ENCODE measurements at regions of chr5 and their contacts with region 1.

Region 1: GRCh38 chr5:76175051-76175666 is 92.0 kb downstream of the SV2C start:
- DNase-seq: peak; percentile 74
- ATAC-seq: no peak
- H3K4me3 Mint-ChIP-seq: no peak overlapping the region
- H3K27ac Mint-ChIP-seq: no peak overlapping the region
- H3K4me1 Mint-ChIP-seq: peaks cover 32% of the 10 kb centered on the region
- H3K27me3 Mint-ChIP-seq: no peaks in the 10 kb centered on the region

Region 2: DNA sequence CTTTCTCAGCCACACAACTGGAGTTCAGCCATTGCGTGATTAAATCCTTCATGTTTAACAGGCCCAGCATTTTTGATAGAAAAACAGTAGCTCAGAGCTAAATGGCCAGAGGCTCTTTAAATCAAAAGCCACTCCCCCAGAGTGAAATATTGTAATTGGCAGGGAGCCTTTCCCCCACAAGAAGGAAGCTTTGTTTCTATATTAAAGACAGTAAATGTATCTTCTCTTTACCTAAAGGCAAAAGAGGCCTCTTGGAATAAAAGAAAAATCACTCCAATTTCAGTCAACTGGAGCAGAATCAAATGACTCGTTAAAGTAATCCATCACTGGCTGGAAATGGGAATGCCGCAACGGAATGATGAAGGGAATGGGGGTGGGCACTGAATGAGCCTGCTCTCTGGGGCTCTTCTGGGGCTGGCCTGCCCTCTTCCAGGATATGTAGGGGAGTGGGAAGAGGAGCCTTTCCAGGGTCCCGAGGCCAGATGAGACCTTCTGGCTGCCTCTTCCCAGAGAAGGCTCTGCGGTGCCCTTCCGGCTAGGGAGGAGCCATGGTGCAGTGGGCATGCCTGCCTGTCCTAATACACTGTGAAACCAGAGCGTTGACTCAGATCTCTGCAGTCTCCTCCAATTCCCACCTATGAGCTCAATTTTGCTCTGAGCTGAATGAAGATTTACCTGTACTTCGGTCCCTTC is 518.7 kb before region 1 on chr5:
- CTCF ChIA-PET with region 1: no interaction called
- POLR2A ChIA-PET with region 1: no interaction called
- intact Hi-C with region 1: no loop called
- DNase-seq: no peak
- ATAC-seq: no peak
- H3K4me3 Mint-ChIP-seq: no peak overlapping the region
- H3K27ac Mint-ChIP-seq: no peak overlapping the region
- H3K4me1 Mint-ChIP-seq: no peaks in the 10 kb centered on the region
- H3K27me3 Mint-ChIP-seq: no peaks in the 10 kb centered on the region

Region 3: GRCh38 chr5:76074487-76075065 is 100.6 kb before region 1 on chr5:
- CTCF ChIA-PET with region 1: interaction called, 13 read pairs
- POLR2A ChIA-PET with region 1: no interaction called
- intact Hi-C with region 1: loop called (anchors 1 to 2 kb)
- DNase-seq: peak; percentile 50
- ATAC-seq: peak; percentile 72
- H3K4me3 Mint-ChIP-seq: no peak overlapping the region
- H3K27ac Mint-ChIP-seq: no peak overlapping the region
- H3K4me1 Mint-ChIP-seq: no peaks in the 10 kb centered on the region
- H3K27me3 Mint-ChIP-seq: peaks cover 50% of the 10 kb centered on the region

Region 4: GRCh38 chr5:76145945-76146344 is 29.2 kb before region 1 on chr5:
- CTCF ChIA-PET with region 1: interaction called, 14 read pairs
- POLR2A ChIA-PET with region 1: no interaction called
- intact Hi-C with region 1: no loop called
- DNase-seq: peak; percentile 38
- ATAC-seq: no peak
- H3K4me3 Mint-ChIP-seq: no peak overlapping the region
- H3K27ac Mint-ChIP-seq: no peak overlapping the region
- H3K4me1 Mint-ChIP-seq: no peaks in the 10 kb centered on the region
- H3K27me3 Mint-ChIP-seq: peaks cover 3% of the 10 kb centered on the region

Region 5: DNA sequence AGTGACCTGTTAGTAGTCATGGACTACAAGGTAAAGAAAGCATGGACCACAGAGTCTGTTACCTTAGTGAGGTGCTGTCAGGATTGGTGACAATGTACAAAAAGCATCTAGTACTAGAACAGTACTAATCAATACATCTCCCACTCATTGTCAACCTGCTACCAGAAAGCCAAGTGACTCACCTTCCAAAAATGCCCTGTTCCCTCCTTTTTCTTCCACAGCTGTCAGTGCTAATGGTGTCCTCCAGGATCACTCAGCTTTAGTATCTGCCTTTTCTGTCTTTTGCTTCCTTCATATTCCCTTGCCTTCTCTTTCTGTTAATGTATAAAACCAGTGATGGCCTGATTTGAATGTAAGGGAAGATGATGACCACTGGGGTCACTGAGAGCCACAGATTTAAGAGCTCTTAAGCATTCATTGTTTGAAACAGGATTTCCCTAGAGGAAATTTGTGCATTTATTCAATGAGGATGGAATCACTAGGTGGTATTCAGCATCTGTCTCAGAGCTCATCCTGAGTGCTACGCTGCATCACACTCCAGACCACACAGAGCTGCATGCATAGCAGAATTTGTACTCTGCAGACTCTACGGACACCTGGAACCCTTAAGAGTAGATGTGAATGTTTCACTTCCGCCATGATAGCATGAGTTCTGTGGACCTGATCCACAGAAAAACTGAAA is 21.0 kb before region 1 on chr5:
- CTCF ChIA-PET with region 1: interaction called, 13 read pairs
- POLR2A ChIA-PET with region 1: no interaction called
- intact Hi-C with region 1: no loop called
- DNase-seq: no peak
- ATAC-seq: no peak
- H3K4me3 Mint-ChIP-seq: no peak overlapping the region
- H3K27ac Mint-ChIP-seq: no peak overlapping the region
- H3K4me1 Mint-ChIP-seq: no peaks in the 10 kb centered on the region
- H3K27me3 Mint-ChIP-seq: peaks cover 21% of the 10 kb centered on the region

Region 6: GRCh38 chr5:76199336-76200318 is 24.5 kb after region 1 on chr5:
- CTCF ChIA-PET with region 1: interaction called, 15 read pairs
- POLR2A ChIA-PET with region 1: interaction called, 3 read pairs
- intact Hi-C with region 1: no loop called
- DNase-seq: no peak
- ATAC-seq: peak; percentile 58
- H3K4me3 Mint-ChIP-seq: no peak overlapping the region
- H3K27ac Mint-ChIP-seq: no peak overlapping the region
- H3K4me1 Mint-ChIP-seq: peaks cover 10% of the 10 kb centered on the region
- H3K27me3 Mint-ChIP-seq: peaks cover 8% of the 10 kb centered on the region

Region 7: DNA sequence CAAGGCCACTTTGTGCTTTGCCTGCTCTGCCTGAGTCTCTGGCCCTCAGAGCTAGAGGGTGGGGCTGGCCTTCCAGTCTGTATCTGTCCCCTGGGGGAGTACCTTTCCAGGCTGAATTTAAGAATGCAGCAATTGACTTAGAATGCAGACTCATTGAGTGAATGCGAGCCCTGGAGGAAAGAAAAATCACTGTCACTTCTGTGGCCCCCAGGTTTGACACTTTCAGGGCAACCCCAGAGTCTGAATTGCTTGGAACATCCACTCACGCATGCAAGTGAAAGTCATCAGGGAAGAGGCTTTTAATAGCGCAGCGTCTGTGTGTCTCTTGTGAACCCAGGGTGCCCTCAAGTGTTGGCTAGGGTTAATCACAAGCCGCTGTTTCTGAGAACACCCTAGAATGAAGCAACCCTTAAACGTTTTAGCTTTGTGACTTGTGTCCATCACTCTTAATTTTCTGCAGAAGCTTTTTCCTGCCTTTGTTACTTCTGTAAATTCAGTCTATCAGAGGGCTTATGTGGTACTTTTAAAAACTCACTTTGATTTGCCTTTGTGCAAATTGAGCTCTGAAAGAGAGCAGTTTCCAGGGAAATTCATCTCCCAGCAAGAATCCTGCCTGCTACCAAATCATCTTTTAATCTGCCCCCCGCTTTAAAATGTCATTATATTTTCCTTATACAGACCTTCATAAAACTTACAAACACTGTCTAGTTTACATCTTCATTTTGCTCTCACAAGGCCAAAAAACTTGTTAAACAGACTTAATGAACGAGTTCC is 81.1 kb after region 1 on chr5:
- CTCF ChIA-PET with region 1: interaction called, 5 read pairs
- POLR2A ChIA-PET with region 1: no interaction called
- intact Hi-C with region 1: loop called (anchors 1 to 5 kb)
- DNase-seq: peak; percentile 76
- ATAC-seq: peak; percentile 96
- H3K4me3 Mint-ChIP-seq: no peak overlapping the region
- H3K27ac Mint-ChIP-seq: no peak overlapping the region
- H3K4me1 Mint-ChIP-seq: peaks cover 7% of the 10 kb centered on the region
- H3K27me3 Mint-ChIP-seq: peaks cover 9% of the 10 kb centered on the region